HEK293 (cell line): ENCODE measurements at regions of chr2 and their contacts with region 1.

Region 1: DNA sequence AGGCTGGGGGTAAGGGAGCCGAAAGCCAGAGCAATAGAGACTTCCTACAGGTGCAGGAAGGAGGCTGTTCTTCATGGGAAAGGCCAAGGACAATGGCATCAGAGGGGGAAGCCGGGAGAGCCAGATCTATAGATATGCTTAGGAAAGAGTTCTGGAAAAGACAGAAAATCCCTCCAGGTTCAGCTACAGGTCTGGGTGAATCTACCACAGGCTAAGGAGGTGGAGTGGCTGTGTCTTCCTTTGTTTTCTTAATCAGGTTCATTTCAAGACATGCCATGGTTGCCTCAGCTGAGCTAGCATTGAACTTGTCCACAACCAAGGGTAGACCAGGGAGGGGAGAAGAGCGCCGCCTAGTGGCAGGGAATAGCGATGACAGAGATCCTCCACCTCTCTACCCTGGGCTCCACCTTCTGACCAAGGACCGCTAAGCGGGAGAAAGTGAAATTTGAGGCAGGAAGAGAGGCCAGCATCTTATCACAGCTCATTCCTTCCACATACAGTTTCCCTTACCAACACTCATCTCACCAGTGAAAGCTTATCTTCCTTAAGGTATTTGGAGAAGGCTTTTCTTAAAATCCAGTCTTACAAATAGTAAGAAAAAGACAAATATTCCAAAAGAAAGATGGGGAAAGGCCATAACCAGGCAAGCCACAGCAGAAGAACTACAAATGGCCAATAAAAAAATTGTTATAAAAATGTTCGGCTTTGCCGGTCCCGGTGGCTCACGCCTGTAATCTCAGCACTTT is 74.2 kb downstream of the VIT start:
- H3K4me3 ChIP-seq: no peak overlapping the region
- H3K27ac ChIP-seq: no peak overlapping the region
- H3K4me1 ChIP-seq: no peaks in the 10 kb centered on the region
- CTCF ChIP-seq: peak; percentile 76

Region 2: GRCh38 chr2:36753706-36754221 is 17.0 kb before region 1 on chr2:
- CTCF ChIA-PET with region 1: interaction called, 20 read pairs
- POLR2A ChIA-PET with region 1: no interaction called
- H3K4me3 ChIP-seq: no peak overlapping the region
- H3K27ac ChIP-seq: no peak overlapping the region
- H3K4me1 ChIP-seq: no peaks in the 10 kb centered on the region
- CTCF ChIP-seq: no peak

Region 3: DNA sequence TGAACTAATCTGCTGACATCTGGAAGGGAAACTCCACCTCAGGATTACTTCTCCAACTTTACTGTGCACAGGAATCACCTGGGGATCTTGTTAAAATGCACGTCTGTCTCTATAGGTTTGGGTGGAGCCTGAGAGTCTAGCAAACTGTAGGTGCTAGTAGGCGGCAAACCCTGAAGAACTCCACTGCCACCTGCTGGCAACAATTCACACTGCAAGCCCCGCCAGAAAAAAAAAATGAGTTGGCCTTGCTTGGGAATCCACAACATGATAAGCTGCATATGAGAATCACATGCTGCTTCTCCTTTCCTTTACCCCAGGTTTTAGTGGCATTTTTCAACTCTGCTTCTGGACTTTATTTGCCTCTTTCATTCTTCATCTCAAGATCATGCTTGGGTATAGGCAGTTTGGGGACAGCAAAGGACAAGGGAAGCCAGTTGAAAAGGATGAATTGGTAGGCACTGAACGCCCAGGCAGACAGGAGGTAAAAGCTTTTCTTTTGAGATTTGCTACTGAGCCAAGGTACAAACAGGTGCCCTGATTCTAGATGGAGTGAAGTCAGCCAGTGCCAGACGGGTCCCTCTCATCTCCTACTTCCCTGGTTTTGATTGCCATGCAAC is 14.6 kb after region 1 on chr2:
- CTCF ChIA-PET with region 1: interaction called, 18 read pairs
- POLR2A ChIA-PET with region 1: no interaction called
- H3K4me3 ChIP-seq: no peak overlapping the region
- H3K27ac ChIP-seq: no peak overlapping the region
- H3K4me1 ChIP-seq: no peaks in the 10 kb centered on the region
- CTCF ChIP-seq: peak; percentile 53

Region 4: GRCh38 chr2:36849265-36849664 is 78.5 kb after region 1 on chr2:
- CTCF ChIA-PET with region 1: no interaction called
- POLR2A ChIA-PET with region 1: no interaction called
- H3K4me3 ChIP-seq: no peak overlapping the region
- H3K27ac ChIP-seq: no peak overlapping the region
- H3K4me1 ChIP-seq: no peaks in the 10 kb centered on the region
- CTCF ChIP-seq: no peak